A673 (cell line): ENCODE measurements at regions of chr14 and their contacts with region 1.

Region 1: DNA sequence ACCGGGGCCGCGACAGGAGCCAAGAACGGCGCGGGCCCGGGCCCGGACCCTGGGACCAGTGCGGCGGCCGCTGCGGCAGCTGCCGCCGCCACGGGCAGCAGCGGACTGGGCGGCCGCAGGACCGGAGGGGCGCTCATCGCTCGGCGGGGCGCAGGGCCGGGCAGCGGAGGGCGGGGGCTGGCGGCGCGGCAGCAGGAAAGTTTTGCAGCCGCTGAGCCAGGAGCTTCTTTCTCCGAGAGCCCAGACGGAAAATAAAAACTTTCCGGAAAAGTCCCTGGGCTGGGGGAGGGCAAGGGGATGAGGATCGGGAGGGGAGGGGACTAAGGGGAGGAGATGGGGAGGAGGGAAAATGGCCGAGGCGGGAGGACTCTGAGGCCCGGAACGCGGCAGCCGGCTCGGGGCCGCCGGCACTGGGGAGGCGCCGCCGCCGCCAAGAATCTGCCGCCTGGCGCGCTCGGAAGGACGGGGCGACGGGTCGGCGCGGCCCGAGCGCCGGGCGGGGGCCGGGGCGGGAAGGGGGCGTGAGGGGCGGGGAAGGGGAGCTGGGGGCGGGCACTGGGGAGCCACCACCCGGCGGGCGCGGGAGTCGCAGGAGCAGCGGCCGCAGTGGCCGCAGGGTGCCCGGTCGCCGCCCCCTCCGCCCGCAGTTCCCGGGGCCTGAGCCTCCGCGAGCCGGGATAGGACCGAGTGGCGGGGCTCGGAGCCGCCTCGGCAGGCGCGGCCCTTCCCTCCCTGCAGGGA is at the start of gene PRKD1:
- DNase-seq: peak; percentile 78
- H3K4me3 ChIP-seq: peak within 1 kb of the TSS; percentile 97
- H3K27ac ChIP-seq: peak within 1 kb of the TSS; percentile 85
- H3K4me1 ChIP-seq: peaks cover 42% of the 10 kb centered on the region
- H3K27me3 ChIP-seq: no peaks in the 10 kb centered on the region
- CTCF ChIP-seq: no peak
- total RNA-seq, gene PRKD1: 41.5 and 45.7 TPM in 2 replicates

Region 2: DNA sequence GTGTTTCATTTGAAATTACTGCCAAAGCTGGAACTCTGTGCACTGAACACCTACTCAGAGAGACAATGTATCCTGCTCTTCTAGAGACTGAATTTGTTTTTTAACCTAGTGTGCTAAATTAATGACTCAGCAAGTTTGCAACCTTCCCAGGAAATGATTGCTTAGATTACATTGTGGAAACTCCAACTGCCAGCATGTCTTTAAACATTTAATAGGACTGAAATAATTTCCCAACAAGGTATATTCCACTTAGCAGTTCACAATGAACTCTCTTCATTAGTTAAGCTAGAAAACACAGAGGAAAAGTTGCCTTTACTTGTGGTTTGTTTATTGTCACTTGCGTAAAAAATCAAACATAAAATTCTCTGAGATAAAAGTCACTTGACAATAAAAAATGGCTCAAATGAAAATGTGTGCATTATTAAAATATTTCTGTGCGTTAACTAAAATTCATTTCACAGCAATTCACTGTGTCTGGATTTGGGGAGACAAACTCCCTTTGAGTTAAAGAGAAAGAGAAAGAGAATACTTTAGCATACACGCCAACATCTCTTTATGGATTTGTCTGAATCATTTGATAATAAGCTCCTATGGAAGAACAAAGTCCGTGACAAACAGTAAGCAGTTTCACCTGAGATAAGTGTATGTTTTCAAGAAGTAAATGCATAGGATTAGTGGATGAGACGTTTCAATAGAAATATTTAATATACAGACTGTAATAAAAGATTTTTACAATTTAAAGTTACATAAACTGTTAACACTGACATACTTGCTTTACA is 283.9 kb before region 1 on chr14:
- CTCF ChIA-PET with region 1: no interaction called
- POLR2A ChIA-PET with region 1: no interaction called
- intact Hi-C with region 1: loop called (anchors 10 kb)
- DNase-seq: peak; percentile 48
- H3K4me3 ChIP-seq: no peak overlapping the region
- H3K27ac ChIP-seq: peak overlapping the region; percentile 23
- H3K4me1 ChIP-seq: peaks cover 24% of the 10 kb centered on the region
- H3K27me3 ChIP-seq: no peaks in the 10 kb centered on the region
- CTCF ChIP-seq: no peak

Region 3: GRCh38 chr14:29810682-29811081 is 116.9 kb before region 1 on chr14:
- CTCF ChIA-PET with region 1: no interaction called
- POLR2A ChIA-PET with region 1: no interaction called
- intact Hi-C with region 1: loop called (anchors 5 kb)
- DNase-seq: peak; percentile 60
- H3K4me3 ChIP-seq: no peak overlapping the region
- H3K27ac ChIP-seq: peak overlapping the region; percentile 61
- H3K4me1 ChIP-seq: peaks cover 42% of the 10 kb centered on the region
- H3K27me3 ChIP-seq: no peaks in the 10 kb centered on the region
- CTCF ChIP-seq: no peak

Region 4: GRCh38 chr14:30005114-30005808 is 77.7 kb after region 1 on chr14:
- CTCF ChIA-PET with region 1: no interaction called
- POLR2A ChIA-PET with region 1: no interaction called
- intact Hi-C with region 1: loop called (anchors 5 kb)
- DNase-seq: peak; percentile 77
- H3K4me3 ChIP-seq: no peak overlapping the region
- H3K27ac ChIP-seq: no peak overlapping the region
- H3K4me1 ChIP-seq: peaks cover 21% of the 10 kb centered on the region
- H3K27me3 ChIP-seq: no peaks in the 10 kb centered on the region
- CTCF ChIP-seq: peak; percentile 81

Region 5: GRCh38 chr14:30214461-30215090 is 287.0 kb after region 1 on chr14:
- CTCF ChIA-PET with region 1: no interaction called
- POLR2A ChIA-PET with region 1: no interaction called
- intact Hi-C with region 1: loop called (anchors 5 kb)
- DNase-seq: peak; percentile 72
- H3K4me3 ChIP-seq: no peak overlapping the region
- H3K27ac ChIP-seq: no peak overlapping the region
- H3K4me1 ChIP-seq: no peaks in the 10 kb centered on the region
- H3K27me3 ChIP-seq: peaks cover 3% of the 10 kb centered on the region
- CTCF ChIP-seq: peak; percentile 76